ENCODE measurements at regions of chr5 and their contacts with region 1.

Region 1: GRCh38 chr5:64811050-64811640 is 42.4 kb downstream of the CWC27 start:
- DNase-seq: peak; percentile 65
- H3K4me3 ChIP-seq: no peak overlapping the region
- H3K27ac ChIP-seq: no peak overlapping the region
- H3K4me1 ChIP-seq: no peaks in the 10 kb centered on the region
- H3K27me3 ChIP-seq: no peaks in the 10 kb centered on the region
- CTCF ChIP-seq: peak; percentile 47
- POLR2A ChIP-seq: no peak

Region 2: GRCh38 chr5:64827703-64828102 is 16.6 kb after region 1 on chr5:
- CTCF ChIA-PET with region 1: interaction called, 15 read pairs
- POLR2A ChIA-PET with region 1: no interaction called
- dilution Hi-C with region 1: no loop called
- intact Hi-C with region 1: no loop called
- DNase-seq: no peak
- H3K4me3 ChIP-seq: no peak overlapping the region
- H3K27ac ChIP-seq: no peak overlapping the region
- H3K4me1 ChIP-seq: peaks cover 4% of the 10 kb centered on the region
- H3K27me3 ChIP-seq: no peaks in the 10 kb centered on the region
- CTCF ChIP-seq: no peak
- POLR2A ChIP-seq: no peak

Region 3: DNA sequence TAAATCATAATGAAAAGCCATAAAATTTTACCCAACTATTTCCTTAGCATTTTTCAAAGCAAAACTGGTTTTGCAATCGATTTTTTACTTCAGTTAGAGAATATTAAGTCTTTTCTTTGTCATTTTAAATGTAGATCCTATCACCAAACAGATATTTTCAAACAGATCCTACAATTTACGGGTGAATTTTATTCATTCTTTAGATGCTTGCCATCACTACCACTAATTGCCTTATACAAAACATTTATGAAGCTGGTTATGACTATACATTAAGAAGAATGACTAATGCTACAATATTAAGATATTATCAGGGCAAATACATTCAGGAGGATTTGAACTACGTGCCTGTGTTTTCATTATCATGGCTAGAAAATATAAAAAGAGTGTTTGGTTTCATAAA is 154.5 kb after region 1 on chr5:
- CTCF ChIA-PET with region 1: interaction called, 11 read pairs
- POLR2A ChIA-PET with region 1: no interaction called
- dilution Hi-C with region 1: no loop called
- intact Hi-C with region 1: no loop called
- DNase-seq: no peak
- H3K4me3 ChIP-seq: no peak overlapping the region
- H3K27ac ChIP-seq: no peak overlapping the region
- H3K4me1 ChIP-seq: no peaks in the 10 kb centered on the region
- H3K27me3 ChIP-seq: no peaks in the 10 kb centered on the region
- CTCF ChIP-seq: no peak
- POLR2A ChIP-seq: no peak

Region 4: DNA sequence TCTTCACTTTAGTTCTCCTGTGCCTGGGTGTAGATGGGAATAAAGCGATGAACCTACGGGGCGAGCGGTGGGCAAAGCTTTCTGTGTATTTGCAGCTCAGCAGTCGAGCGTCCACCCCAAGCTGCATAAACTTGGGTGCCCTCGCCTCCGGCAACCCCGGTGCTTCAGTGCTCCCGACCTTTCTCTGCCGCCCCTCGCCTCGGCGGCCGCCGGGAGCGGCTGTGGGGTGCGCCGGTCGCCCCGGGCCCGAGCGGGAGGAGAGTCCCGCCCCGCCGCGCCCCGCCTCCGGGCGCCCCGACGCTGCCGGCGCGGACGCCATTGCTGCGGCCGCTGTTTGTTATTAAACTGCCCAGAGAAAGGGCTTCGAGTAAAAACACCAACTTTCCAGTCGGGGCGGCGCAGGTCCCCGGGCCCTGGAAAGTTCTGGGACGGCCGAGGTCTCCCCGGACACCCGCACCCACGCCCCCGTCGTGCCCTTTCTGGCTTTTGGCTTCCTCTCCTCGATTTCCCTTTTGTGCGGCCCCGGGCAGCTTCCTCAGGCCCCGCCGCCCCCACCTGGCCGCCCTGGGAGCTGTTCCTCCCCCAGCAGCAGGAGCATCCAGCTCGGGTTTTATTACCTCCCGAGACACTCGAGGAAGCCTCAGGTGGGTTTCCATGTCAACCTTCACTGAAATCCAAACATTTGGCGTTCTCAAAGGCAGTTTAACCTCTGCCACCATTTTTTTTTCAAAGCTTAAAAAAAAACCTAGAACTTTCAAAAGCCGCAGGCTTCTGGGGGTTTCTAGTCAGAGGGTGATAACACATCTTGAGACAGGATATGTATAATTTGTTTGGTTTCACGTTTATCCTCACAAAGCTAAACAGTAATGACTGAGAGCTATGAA is 291.9 kb after region 1 on chr5:
- CTCF ChIA-PET with region 1: interaction called, 11 read pairs
- POLR2A ChIA-PET with region 1: no interaction called
- dilution Hi-C with region 1: no loop called
- intact Hi-C with region 1: loop called (anchors 2 kb)
- DNase-seq: peak; percentile 74
- H3K4me3 ChIP-seq: peak overlapping the region; percentile 13 to 57 (median 43)
- H3K27ac ChIP-seq: peak overlapping the region; percentile 63
- H3K4me1 ChIP-seq: peaks cover 13% of the 10 kb centered on the region
- H3K27me3 ChIP-seq: no peaks in the 10 kb centered on the region
- CTCF ChIP-seq: peak in 1 of 2 donors; percentile 36
- POLR2A ChIP-seq: peak; percentile 34

Region 5: GRCh38 chr5:65475895-65476294 is 664.8 kb after region 1 on chr5:
- CTCF ChIA-PET with region 1: interaction called, 275 read pairs
- POLR2A ChIA-PET with region 1: no interaction called
- dilution Hi-C with region 1: no loop called
- intact Hi-C with region 1: no loop called
- DNase-seq: peak; percentile 39
- H3K4me3 ChIP-seq: peak overlapping the region in 1 of 3 experiments; percentile 19
- H3K27ac ChIP-seq: peak overlapping the region; percentile 60
- H3K4me1 ChIP-seq: peaks cover 86% of the 10 kb centered on the region
- H3K27me3 ChIP-seq: no peaks in the 10 kb centered on the region
- CTCF ChIP-seq: no peak
- POLR2A ChIP-seq: no peak

Region 6: GRCh38 chr5:65588694-65589093 is 777.5 kb after region 1 on chr5:
- CTCF ChIA-PET with region 1: interaction called, 22 read pairs
- POLR2A ChIA-PET with region 1: no interaction called
- dilution Hi-C with region 1: no loop called
- intact Hi-C with region 1: no loop called
- DNase-seq: no peak
- H3K4me3 ChIP-seq: no peak overlapping the region
- H3K27ac ChIP-seq: no peak overlapping the region
- H3K4me1 ChIP-seq: peaks cover 7% of the 10 kb centered on the region
- H3K27me3 ChIP-seq: no peaks in the 10 kb centered on the region
- CTCF ChIP-seq: no peak
- POLR2A ChIP-seq: no peak

Measured in endothelial cell of umbilical vein (primary cell).